ENCODE measurements at regions of chr3 and their contacts with region 1.

Region 1: GRCh38 chr3:102229062-102229655 is 205.7 kb upstream of the ZPLD1 start:
- DNase-seq: peak; percentile 41
- H3K4me3 ChIP-seq: no peak overlapping the region
- H3K27ac ChIP-seq: no peak overlapping the region
- H3K4me1 ChIP-seq: peaks cover 5 to 11% of the 10 kb centered on the region in 2 experiments; a peak in 3 of 4 replicates
- H3K27me3 ChIP-seq: no peaks in the 10 kb centered on the region
- CTCF ChIP-seq: peak; percentile 96
- EP300 ChIP-seq: 0 out of 4 replicates have a peak, but pooled peaks of 1 of the 2 experiments have one; percentile 10
- RAD21 ChIP-seq: peak; percentile 98

Region 2: GRCh38 chr3:101809178-101810021 is 419.8 kb before region 1 on chr3:
- CTCF ChIA-PET with region 1: interaction called, 165 read pairs
- POLR2A ChIA-PET with region 1: interaction called, 6 read pairs
- DNase-seq: peak; percentile 39
- H3K4me3 ChIP-seq: no peak overlapping the region; a peak in 1 of 4 replicates
- H3K27ac ChIP-seq: peak overlapping the region in 1 of 2 experiments; percentile 43; a peak in 3 of 4 replicates
- H3K4me1 ChIP-seq: peaks cover 6 to 7% of the 10 kb centered on the region in 2 experiments; a peak in 3 of 4 replicates
- H3K27me3 ChIP-seq: no peaks in the 10 kb centered on the region
- CTCF ChIP-seq: peak; percentile 75
- EP300 ChIP-seq: no peak
- RAD21 ChIP-seq: peak; percentile 78

Region 3: GRCh38 chr3:101849051-101849720 is 380.0 kb before region 1 on chr3 and contains the start of gene NFKBIZ:
- CTCF ChIA-PET with region 1: interaction called, 18 read pairs
- POLR2A ChIA-PET with region 1: interaction called, 5 read pairs
- DNase-seq: peak; percentile 99
- H3K4me3 ChIP-seq: peak within 1 kb of the TSS; percentile 77 to 87
- H3K27ac ChIP-seq: peak within 1 kb of the TSS; percentile 82
- H3K4me1 ChIP-seq: peaks cover 0 to 5% of the 10 kb centered on the region in 2 experiments; a peak in 3 of 4 replicates
- H3K27me3 ChIP-seq: no peaks in the 10 kb centered on the region
- CTCF ChIP-seq: no peak
- EP300 ChIP-seq: no peak
- RAD21 ChIP-seq: no peak
- polyA plus RNA-seq, gene NFKBIZ: 59.9 and 70.9 TPM in 2 replicates

Region 4: GRCh38 chr3:102536456-102536855 is 307.3 kb after region 1 on chr3:
- CTCF ChIA-PET with region 1: interaction called, 151 read pairs
- POLR2A ChIA-PET with region 1: interaction called, 4 read pairs
- DNase-seq: peak; percentile 39
- H3K4me3 ChIP-seq: peak overlapping the region in 1 of 2 experiments; percentile 21; a peak in 1 of 4 replicates
- H3K27ac ChIP-seq: no peak overlapping the region
- H3K4me1 ChIP-seq: no peaks in the 10 kb centered on the region; a peak in 2 of 4 replicates
- H3K27me3 ChIP-seq: no peaks in the 10 kb centered on the region
- CTCF ChIP-seq: peak; percentile 66
- EP300 ChIP-seq: no peak
- RAD21 ChIP-seq: peak; percentile 87

Region 5: GRCh38 chr3:102673271-102674115 is 444.3 kb after region 1 on chr3:
- CTCF ChIA-PET with region 1: interaction called, 16 read pairs
- POLR2A ChIA-PET with region 1: no interaction called
- DNase-seq: peak; percentile 64
- H3K4me3 ChIP-seq: peak overlapping the region; percentile 33 to 37; a peak in 3 of 4 replicates
- H3K27ac ChIP-seq: peak overlapping the region in 1 of 2 experiments; percentile 93; a peak in 2 of 4 replicates
- H3K4me1 ChIP-seq: peaks cover 0 to 10% of the 10 kb centered on the region in 2 experiments; a peak in 2 of 4 replicates
- H3K27me3 ChIP-seq: no peaks in the 10 kb centered on the region
- CTCF ChIP-seq: peak; percentile 95
- EP300 ChIP-seq: peak in 1 of 2 experiments; percentile 53; a peak in 1 of 4 replicates
- RAD21 ChIP-seq: peak; percentile 92

Measured in SK-N-SH (cell line).